ENCODE measurements at regions of chr1 and their contacts with region 1.

Region 1: DNA sequence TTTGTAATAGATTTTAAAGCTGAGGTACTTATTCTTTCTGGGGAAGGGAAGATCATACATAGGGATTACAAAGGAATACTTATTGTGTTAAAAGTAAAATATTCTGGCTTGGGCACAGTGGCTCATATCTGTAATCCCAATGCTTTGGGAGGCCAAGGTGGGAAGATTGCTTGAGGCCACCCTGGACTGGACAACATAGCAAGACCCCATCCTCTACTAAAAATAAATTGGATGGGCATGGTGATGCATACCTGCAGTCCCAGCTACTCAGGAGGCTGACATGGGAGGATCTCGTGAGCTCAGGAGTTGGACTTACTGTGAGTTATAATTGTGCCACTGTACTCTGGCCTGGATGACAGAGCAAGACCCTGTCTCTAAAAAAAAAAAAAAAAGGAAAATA is 27.6 kb downstream of the GABPB2 start:
- DNase-seq: no peak
- H3K4me3 Mint-ChIP-seq: no peak overlapping the region
- H3K27ac Mint-ChIP-seq: no peak overlapping the region
- H3K4me1 Mint-ChIP-seq: no peaks in the 10 kb centered on the region
- H3K27me3 Mint-ChIP-seq: no peaks in the 10 kb centered on the region

Region 2: GRCh38 chr1:151085953-151086559 is 12.1 kb before region 1 on chr1:
- CTCF ChIA-PET with region 1: interaction called, 19 read pairs
- intact Hi-C with region 1: no loop called
- DNase-seq: no peak
- H3K4me3 Mint-ChIP-seq: no peak overlapping the region
- H3K27ac Mint-ChIP-seq: no peak overlapping the region
- H3K4me1 Mint-ChIP-seq: no peaks in the 10 kb centered on the region
- H3K27me3 Mint-ChIP-seq: no peaks in the 10 kb centered on the region

Region 3: DNA sequence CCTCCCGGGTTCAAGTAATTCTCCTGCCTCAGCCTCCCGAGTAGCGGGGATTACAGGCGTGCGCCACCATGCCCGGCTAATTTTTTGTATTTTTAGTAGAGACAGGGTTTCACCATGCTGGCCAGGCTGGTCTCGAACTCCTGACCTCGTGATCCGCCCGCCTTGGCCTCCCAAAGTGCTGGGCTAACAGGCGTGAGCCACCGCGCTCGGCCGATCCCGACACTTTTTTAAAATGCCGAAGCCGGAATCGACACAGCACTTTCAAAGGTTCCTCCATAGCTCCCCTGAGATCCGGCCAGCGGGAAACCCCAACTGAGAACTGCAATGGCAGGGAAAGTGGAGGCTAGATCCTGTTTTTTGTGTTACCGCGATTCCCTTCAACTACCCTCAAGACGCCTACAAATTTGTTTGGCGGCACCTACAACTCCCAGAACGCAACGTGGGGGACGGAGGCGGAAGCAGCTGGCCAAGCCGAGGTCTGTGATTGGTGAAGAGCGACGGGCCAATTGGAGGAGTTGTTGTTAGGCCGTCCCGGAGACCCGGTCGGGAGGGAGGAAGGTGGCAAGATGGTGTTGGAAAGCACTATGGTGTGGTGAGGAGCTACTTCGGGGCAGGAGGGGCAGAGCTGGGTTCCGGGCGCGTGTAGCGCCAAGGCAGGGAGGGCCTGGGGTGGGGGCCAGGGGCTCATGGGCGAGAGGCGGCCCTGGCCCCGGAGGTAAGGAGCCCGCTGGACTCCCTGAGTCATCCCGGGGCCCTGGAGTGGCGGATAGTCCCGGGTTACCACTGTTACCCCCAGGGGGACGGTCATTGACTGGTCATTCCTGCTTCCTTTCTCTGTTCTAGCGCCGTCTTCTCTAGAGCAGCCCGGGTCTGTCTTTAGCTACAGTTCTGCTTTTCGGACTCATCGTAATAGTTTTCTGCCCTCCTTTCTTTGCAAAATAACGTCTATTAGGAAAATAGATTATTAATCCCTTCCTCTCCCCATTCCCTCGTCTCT is 156.4 kb after region 1 on chr1 and contains the start of gene PSMD4:
- CTCF ChIA-PET with region 1: interaction called, 23 read pairs
- intact Hi-C with region 1: loop called (anchors 1 kb)
- DNase-seq: peak; percentile 97
- H3K4me3 Mint-ChIP-seq: peak within 1 kb of the TSS; percentile 95
- H3K27ac Mint-ChIP-seq: peak within 1 kb of the TSS; percentile 92
- H3K4me1 Mint-ChIP-seq: peaks cover 31% of the 10 kb centered on the region
- H3K27me3 Mint-ChIP-seq: peaks cover 2% of the 10 kb centered on the region
- total RNA-seq, gene PSMD4: 167 to 192 TPM

Measured in activated naive CD4-positive, alpha-beta T cell treated with anti-CD3 and anti-CD28 coated beads for 36 hours (primary cell).